CD14-positive monocyte (primary cell): ENCODE measurements at regions of chr11 and their contacts with region 1.

Region 1: GRCh38 chr11:47407746-47408590 is at the start of gene SLC39A13:
- DNase-seq: peak; percentile 97 to 99 (median 98)
- H3K4me3 ChIP-seq: peak within 1 kb of the TSS; percentile 39 to 79 (median 50)
- H3K4me3 Mint-ChIP-seq: peak within 1 kb of the TSS; percentile 88 to 91
- H3K27ac ChIP-seq: peak within 1 kb of the TSS; percentile 94 to 100
- H3K27ac Mint-ChIP-seq: peak within 1 kb of the TSS; percentile 98 to 100 (median 98)
- H3K4me1 ChIP-seq: peaks cover 36 to 50% of the 10 kb centered on the region in 2 donors
- H3K4me1 Mint-ChIP-seq: peaks cover 33% of the 10 kb centered on the region
- H3K27me3 ChIP-seq: no peaks in the 10 kb centered on the region
- H3K27me3 Mint-ChIP-seq: peaks cover 0 to 1% (median under 1%) of the 10 kb centered on the region in 3 donors
- CTCF ChIP-seq: peak; percentile 99
- polyA plus RNA-seq, gene SLC39A13: 4.8 to 27.4 (median 5.9) TPM

Region 2: DNA sequence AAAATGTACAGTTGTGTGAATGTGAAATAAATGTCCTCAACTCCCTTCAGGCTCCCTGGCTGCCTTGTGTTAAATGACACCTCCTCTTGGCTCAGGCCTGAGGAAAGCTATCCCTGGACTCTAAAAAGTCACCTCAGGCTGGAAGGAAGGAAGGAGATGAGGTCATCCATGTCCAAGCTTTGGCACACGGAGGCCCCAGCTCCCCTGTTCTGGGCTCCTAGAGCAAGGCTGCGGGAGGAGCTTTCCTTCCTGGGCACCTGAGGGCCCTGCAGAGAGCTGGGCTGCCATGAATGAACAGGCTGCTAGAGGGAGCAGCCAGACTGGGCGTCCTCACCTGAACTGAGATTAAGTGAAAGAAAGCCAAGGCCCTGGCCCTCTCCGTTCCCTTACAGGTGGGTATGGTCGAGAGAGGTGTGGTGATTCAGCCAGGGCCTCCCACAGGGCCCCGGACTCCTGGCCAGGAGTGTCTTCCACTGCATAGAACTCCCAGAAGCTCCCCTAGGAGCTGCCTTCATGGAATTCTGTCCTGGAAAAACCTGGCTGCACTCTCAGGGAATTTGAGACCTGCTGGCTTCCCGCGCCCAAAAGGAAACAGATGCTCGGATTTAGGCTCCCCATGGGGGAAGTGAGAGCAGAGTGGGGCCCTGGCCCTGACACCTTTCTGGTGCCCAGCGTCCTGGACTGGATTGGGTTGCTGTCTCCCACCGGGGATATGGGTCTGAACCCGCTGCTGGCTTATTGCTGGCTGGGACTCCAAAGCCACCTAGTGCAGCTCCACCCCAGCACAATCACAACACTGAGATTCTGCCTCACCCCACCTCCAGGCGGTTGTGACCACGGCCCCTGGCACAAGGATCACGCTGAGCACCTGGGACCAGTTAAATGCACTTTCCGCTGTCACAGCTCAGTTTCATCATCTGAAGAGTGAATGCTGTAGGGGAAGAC is 77.7 kb before region 1 on chr11:
- intact Hi-C with region 1: loop called in 1 of 2 experiments (anchors 5 kb)
- DNase-seq: no peak
- H3K4me3 ChIP-seq: no peak overlapping the region
- H3K4me3 Mint-ChIP-seq: no peak overlapping the region
- H3K27ac ChIP-seq: peak overlapping the region in 1 of 2 donors; percentile 12
- H3K27ac Mint-ChIP-seq: peak overlapping the region in 5 of 7 donors; percentile 20 to 53 (median 46)
- H3K4me1 ChIP-seq: peaks cover 0 to 6% of the 10 kb centered on the region in 2 donors
- H3K4me1 Mint-ChIP-seq: peaks cover 8% of the 10 kb centered on the region
- H3K27me3 ChIP-seq: no peaks in the 10 kb centered on the region
- H3K27me3 Mint-ChIP-seq: no peaks in the 10 kb centered on the region
- CTCF ChIP-seq: no peak

Region 3: GRCh38 chr11:47373876-47374720 is 33.9 kb before region 1 on chr11:
- intact Hi-C with region 1: loop called (anchors 1 kb)
- DNase-seq: peak; percentile 71 to 85 (median 77)
- H3K4me3 ChIP-seq: peak overlapping the region; percentile 84 to 99 (median 97)
- H3K4me3 Mint-ChIP-seq: peak overlapping the region; percentile 98 to 99
- H3K27ac ChIP-seq: peak overlapping the region; percentile 96 to 97
- H3K27ac Mint-ChIP-seq: peak overlapping the region in 1 of 7 donors; percentile 89
- H3K4me1 ChIP-seq: peaks cover 58 to 72% of the 10 kb centered on the region in 2 donors
- H3K4me1 Mint-ChIP-seq: peaks cover 60% of the 10 kb centered on the region
- H3K27me3 ChIP-seq: no peaks in the 10 kb centered on the region
- H3K27me3 Mint-ChIP-seq: peaks cover 0 to 4% (median 2%) of the 10 kb centered on the region in 3 donors
- CTCF ChIP-seq: peak; percentile 94

Region 4: GRCh38 chr11:47433991-47434786 is 26.2 kb after region 1 on chr11:
- intact Hi-C with region 1: no loop called
- DNase-seq: no peak
- H3K4me3 ChIP-seq: no peak overlapping the region
- H3K4me3 Mint-ChIP-seq: no peak overlapping the region
- H3K27ac ChIP-seq: no peak overlapping the region
- H3K27ac Mint-ChIP-seq: no peak overlapping the region
- H3K4me1 ChIP-seq: no peaks in the 10 kb centered on the region
- H3K4me1 Mint-ChIP-seq: no peaks in the 10 kb centered on the region
- H3K27me3 ChIP-seq: no peaks in the 10 kb centered on the region
- H3K27me3 Mint-ChIP-seq: peaks cover 0 to 7% (median 5%) of the 10 kb centered on the region in 3 donors
- CTCF ChIP-seq: no peak